Endothelial cell of umbilical vein (primary cell): ENCODE measurements at regions of chrX and their contacts with region 1.

Region 1: DNA sequence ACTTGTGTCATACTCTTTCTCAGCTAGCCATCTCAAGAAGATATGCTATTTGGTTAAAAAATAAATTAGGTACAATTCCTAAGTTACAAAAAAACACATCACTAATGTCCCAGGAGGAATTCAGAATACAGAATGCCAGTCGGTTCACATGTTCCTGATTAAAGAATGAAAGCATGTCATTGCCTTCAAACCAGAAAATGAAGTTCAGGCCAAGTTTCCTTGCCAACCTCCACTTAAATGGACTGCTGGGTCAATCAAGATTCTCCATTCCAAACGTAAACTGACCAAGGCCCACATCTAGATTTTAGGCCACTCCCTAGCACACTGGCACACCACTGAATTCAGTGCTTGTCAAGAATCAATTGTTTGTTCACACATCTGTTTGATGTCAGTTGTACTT is 6.5 kb downstream of the PIGA start:
- DNase-seq: no peak
- H3K4me3 ChIP-seq: no peak overlapping the region
- H3K27ac ChIP-seq: no peak overlapping the region
- H3K4me1 ChIP-seq: no peaks in the 10 kb centered on the region
- H3K27me3 ChIP-seq: no peaks in the 10 kb centered on the region
- CTCF ChIP-seq: no peak
- POLR2A ChIP-seq: no peak

Region 2: GRCh38 chrX:14916017-14916674 is 412.7 kb before region 1 on chrX:
- CTCF ChIA-PET with region 1: no interaction called
- POLR2A ChIA-PET with region 1: no interaction called
- dilution Hi-C with region 1: no loop called
- intact Hi-C with region 1: no loop called
- DNase-seq: peak; percentile 17
- H3K4me3 ChIP-seq: no peak overlapping the region
- H3K27ac ChIP-seq: no peak overlapping the region
- H3K4me1 ChIP-seq: peaks cover 6% of the 10 kb centered on the region
- H3K27me3 ChIP-seq: no peaks in the 10 kb centered on the region
- CTCF ChIP-seq: no peak
- POLR2A ChIP-seq: no peak

Region 3: GRCh38 chrX:15310117-15310516 is 18.7 kb before region 1 on chrX:
- CTCF ChIA-PET with region 1: no interaction called
- POLR2A ChIA-PET with region 1: no interaction called
- dilution Hi-C with region 1: no loop called
- intact Hi-C with region 1: no loop called
- DNase-seq: peak; percentile 91
- H3K4me3 ChIP-seq: no peak overlapping the region
- H3K27ac ChIP-seq: no peak overlapping the region
- H3K4me1 ChIP-seq: peaks cover 6% of the 10 kb centered on the region
- H3K27me3 ChIP-seq: no peaks in the 10 kb centered on the region
- CTCF ChIP-seq: no peak
- POLR2A ChIP-seq: no peak

Region 4: GRCh38 chrX:15404401-15405096 is 75.7 kb after region 1 on chrX:
- CTCF ChIA-PET with region 1: no interaction called
- POLR2A ChIA-PET with region 1: interaction called, 10 read pairs
- dilution Hi-C with region 1: no loop called
- intact Hi-C with region 1: no loop called
- DNase-seq: peak; percentile 51
- H3K4me3 ChIP-seq: no peak overlapping the region
- H3K27ac ChIP-seq: peak overlapping the region; percentile 28
- H3K4me1 ChIP-seq: peaks cover 9% of the 10 kb centered on the region
- H3K27me3 ChIP-seq: no peaks in the 10 kb centered on the region
- CTCF ChIP-seq: no peak
- POLR2A ChIP-seq: no peak